Activated T-helper 2 cell treated with anti-CD3 and anti-CD28 coated beads, Interferon-gamma antibody, Interleukin-2, Interleukin-4, amounts not matched to agents 10 μg/mL and 5 μg/mL and 100 μg/mL, durations not matched to agents 14 hours and 24 hours and 36 hours (primary cell): ENCODE measurements at regions of chr20 and their contacts with region 1.

Region 1: GRCh38 chr20:32789896-32790750 is 27.9 kb downstream of the DNMT3B start:
- DNase-seq: peak; percentile 54
- H3K4me3 Mint-ChIP-seq: no peak overlapping the region
- H3K27ac Mint-ChIP-seq: no peak overlapping the region
- H3K4me1 Mint-ChIP-seq: peaks cover 15% of the 10 kb centered on the region
- H3K27me3 Mint-ChIP-seq: no peaks in the 10 kb centered on the region

Region 2: DNA sequence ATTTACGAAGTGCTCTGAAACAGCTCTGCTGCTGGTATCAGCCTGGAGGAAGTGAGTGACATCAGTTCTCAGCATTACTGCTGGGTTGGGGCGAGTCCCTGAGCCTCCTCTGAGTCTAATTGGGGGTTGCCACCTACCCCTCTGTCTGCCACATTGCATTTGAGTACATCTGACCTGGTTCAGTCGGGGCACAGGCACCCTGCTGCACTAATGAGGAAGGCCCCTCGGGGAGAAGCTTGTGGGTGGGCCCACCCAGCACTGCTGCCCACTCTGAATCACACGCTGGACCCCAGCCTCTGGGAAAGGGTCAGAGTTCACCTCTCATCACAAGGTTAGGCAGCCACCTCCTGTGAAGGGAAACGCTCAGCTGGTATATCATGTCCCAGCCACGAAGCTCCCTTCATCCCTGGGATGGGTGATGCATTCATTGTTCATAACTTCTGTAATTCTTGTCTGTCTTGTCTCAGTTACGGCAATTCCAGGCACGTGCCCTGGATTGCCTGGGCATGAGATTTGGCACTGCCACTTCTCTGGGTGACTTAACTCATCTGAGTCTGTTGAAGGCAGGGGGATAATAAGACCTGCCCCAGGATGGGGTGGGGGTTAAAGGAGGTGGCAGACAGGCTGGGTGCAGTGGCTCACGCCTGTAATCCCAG is 14.7 kb before region 1 on chr20:
- intact Hi-C with region 1: no loop called
- DNase-seq: no peak
- H3K4me3 Mint-ChIP-seq: no peak overlapping the region
- H3K27ac Mint-ChIP-seq: peak overlapping the region; percentile 40
- H3K4me1 Mint-ChIP-seq: peaks cover 30% of the 10 kb centered on the region
- H3K27me3 Mint-ChIP-seq: no peaks in the 10 kb centered on the region

Region 3: DNA sequence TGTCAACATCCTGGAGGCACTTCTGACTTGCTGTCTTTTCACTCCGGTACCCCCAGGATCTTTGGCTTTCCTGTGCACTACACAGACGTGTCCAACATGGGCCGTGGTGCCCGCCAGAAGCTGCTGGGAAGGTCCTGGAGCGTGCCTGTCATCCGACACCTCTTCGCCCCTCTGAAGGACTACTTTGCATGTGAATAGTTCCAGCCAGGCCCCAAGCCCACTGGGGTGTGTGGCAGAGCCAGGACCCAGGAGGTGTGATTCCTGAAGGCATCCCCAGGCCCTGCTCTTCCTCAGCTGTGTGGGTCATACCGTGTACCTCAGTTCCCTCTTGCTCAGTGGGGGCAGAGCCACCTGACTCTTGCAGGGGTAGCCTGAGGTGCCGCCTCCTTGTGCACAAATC is 17.6 kb after region 1 on chr20:
- intact Hi-C with region 1: no loop called
- DNase-seq: no peak
- H3K4me3 Mint-ChIP-seq: no peak overlapping the region
- H3K27ac Mint-ChIP-seq: no peak overlapping the region
- H3K4me1 Mint-ChIP-seq: no peaks in the 10 kb centered on the region
- H3K27me3 Mint-ChIP-seq: peaks cover 2% of the 10 kb centered on the region

Region 4: DNA sequence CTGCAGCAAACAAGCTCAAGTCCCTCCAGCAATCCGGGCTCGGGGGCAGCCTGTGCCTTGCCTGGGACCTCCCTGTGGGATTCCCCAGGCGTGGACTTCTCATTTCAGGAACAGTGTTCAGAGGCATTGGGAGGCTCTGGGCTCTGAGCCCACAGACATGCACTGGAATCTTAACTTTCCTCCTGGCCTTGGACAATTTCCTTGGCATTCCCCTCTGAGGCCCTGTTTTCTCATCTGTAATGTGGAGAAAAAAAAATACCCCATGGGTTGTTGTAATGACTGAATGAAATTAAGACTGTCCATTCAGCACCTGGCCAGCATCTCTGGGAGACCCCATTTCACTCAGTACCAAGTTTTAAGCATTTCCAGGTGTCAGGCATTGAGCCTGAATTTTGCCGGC is 306.9 kb after region 1 on chr20:
- intact Hi-C with region 1: loop called (anchors 10 kb)
- DNase-seq: no peak
- H3K4me3 Mint-ChIP-seq: no peak overlapping the region
- H3K27ac Mint-ChIP-seq: no peak overlapping the region
- H3K4me1 Mint-ChIP-seq: peaks cover 2% of the 10 kb centered on the region
- H3K27me3 Mint-ChIP-seq: peaks cover 4% of the 10 kb centered on the region

Region 5: GRCh38 chr20:33299111-33299603 is 509.0 kb after region 1 on chr20:
- intact Hi-C with region 1: loop called (anchors 5 kb)
- DNase-seq: peak; percentile 58
- H3K4me3 Mint-ChIP-seq: no peak overlapping the region
- H3K27ac Mint-ChIP-seq: no peak overlapping the region
- H3K4me1 Mint-ChIP-seq: no peaks in the 10 kb centered on the region
- H3K27me3 Mint-ChIP-seq: peaks cover 10% of the 10 kb centered on the region